Calu3 (cell line): ENCODE measurements at regions of chr11 and their contacts with region 1.

Region 1: DNA sequence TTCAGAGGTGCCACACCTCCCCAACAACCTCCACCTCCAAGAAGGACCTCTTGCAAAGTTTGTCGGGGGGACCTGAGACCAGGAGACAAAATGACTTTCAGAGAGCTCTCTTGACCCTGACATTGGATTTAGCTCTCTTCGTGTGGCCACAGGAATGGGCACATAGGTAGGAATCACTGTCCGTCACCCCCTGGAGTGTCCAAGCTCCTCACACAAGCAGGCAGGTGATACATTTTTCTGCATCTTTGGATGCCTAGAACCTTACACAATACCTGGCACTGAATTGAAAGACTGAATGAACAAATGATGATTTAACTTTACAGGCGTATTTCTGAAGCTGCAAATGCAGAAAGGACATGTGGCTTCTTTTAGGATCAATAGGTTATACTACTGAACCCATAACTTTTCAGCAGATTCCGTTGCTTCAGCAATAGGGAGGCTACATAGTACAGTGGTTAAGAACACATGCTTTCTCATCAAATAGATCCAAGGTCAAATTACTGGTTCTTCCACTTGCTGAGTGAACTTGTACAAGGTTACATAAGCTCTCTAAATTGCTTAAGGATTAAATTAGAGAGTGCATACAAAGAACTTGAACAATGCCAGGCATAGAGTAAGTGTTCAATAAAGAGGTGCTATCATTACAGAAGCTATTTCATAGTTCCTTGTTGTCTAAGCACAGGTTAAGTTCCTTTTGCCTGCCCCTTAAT is 129.5 kb downstream of the BARX2 start:
- DNase-seq: no peak
- H3K4me3 Mint-ChIP-seq: no peak overlapping the region
- H3K27ac Mint-ChIP-seq: no peak overlapping the region
- H3K4me1 Mint-ChIP-seq: peaks cover 8% of the 10 kb centered on the region
- H3K27me3 Mint-ChIP-seq: no peaks in the 10 kb centered on the region
- CTCF ChIP-seq: no peak

Region 2: GRCh38 chr11:129386795-129387397 is 118.2 kb before region 1 on chr11:
- CTCF ChIA-PET with region 1: no interaction called
- intact Hi-C with region 1: loop called (anchors 5 kb)
- DNase-seq: no peak
- H3K4me3 Mint-ChIP-seq: peak overlapping the region; percentile 67
- H3K27ac Mint-ChIP-seq: peak overlapping the region; percentile 90
- H3K4me1 Mint-ChIP-seq: peaks cover 85% of the 10 kb centered on the region
- H3K27me3 Mint-ChIP-seq: no peaks in the 10 kb centered on the region
- CTCF ChIP-seq: no peak